Heart left ventricle (tissue), 16 donors: ENCODE measurements at regions of chr5 and their contacts with region 1.

Region 1: DNA sequence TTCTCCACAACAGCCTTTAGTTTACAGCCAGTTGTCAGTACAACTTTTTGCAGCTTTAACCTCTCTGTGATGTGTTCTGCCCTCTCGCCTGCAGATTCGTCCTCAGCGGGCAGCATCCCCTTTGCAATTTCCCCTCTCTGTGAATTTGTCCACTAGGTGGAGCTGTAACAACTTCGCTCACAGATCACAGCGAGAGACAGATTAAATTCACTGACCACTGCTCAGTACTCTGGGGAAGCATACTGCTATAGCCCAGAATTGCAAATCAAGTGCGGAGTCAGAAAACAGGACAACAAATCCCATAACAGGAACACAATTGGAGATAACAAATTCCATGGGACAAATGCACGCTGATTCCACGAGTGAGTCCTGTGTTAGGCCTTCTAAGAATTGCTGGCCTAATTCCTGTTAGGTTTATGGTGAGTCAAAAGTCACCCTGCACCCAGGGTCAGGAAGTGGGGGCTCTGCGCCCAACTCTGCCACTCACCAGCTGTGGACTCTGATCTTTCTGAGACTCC is 2124.9 kb downstream of the MAT2B start:
- DNase-seq: peak in 3 of 5 donors; percentile 24 to 36 (median 29)
- ATAC-seq: peak in 3 of 4 donors; percentile 66 to 81 (median 70)
- H3K4me3 ChIP-seq: no peak overlapping the region
- H3K27ac ChIP-seq: no peak overlapping the region
- H3K4me1 ChIP-seq: peaks cover 0 to 5% (median 0%) of the 10 kb centered on the region in 12 donors
- H3K27me3 ChIP-seq: no peaks in the 10 kb centered on the region
- CTCF ChIP-seq: peak; percentile 54 to 79 (median 68)
- POLR2A ChIP-seq: no peak

Region 2: DNA sequence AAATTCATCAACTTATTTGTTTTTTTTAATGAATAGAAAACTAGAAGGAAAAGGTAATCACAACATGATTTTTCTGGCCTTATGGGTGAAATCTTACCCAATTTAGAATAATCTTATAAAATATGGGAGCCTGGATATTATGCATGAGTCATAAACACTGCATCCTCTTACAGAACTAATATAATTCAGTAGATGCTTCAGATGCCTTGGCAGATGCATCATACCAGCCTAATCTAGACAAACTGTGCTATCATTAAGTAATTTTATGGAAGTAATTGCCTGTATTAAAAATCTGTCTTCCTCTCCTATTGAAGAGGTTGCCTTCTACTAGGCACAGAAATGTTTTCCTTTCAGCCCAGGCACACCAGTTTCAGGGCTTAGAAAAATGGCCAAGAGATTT is 276.6 kb after region 1 on chr5:
- intact Hi-C with region 1: no loop called
- DNase-seq: no peak
- ATAC-seq: no peak
- H3K4me3 ChIP-seq: no peak overlapping the region
- H3K27ac ChIP-seq: no peak overlapping the region
- H3K4me1 ChIP-seq: no peaks in the 10 kb centered on the region
- H3K27me3 ChIP-seq: no peaks in the 10 kb centered on the region
- CTCF ChIP-seq: no peak
- POLR2A ChIP-seq: no peak

Region 3: GRCh38 chr5:167049043-167049663 is 1418.8 kb after region 1 on chr5:
- intact Hi-C with region 1: loop called in 1 of 10 experiments (anchors 5 kb)
- DNase-seq: peak in 1 of 5 donors; percentile 25
- ATAC-seq: peak in 2 of 4 donors; percentile 48 to 76
- H3K4me3 ChIP-seq: no peak overlapping the region
- H3K27ac ChIP-seq: no peak overlapping the region
- H3K4me1 ChIP-seq: no peaks in the 10 kb centered on the region
- H3K27me3 ChIP-seq: no peaks in the 10 kb centered on the region
- CTCF ChIP-seq: peak; percentile 12 to 67 (median 52)
- POLR2A ChIP-seq: no peak